ENCODE measurements at regions of chr6 and their contacts with region 1.

Region 1: DNA sequence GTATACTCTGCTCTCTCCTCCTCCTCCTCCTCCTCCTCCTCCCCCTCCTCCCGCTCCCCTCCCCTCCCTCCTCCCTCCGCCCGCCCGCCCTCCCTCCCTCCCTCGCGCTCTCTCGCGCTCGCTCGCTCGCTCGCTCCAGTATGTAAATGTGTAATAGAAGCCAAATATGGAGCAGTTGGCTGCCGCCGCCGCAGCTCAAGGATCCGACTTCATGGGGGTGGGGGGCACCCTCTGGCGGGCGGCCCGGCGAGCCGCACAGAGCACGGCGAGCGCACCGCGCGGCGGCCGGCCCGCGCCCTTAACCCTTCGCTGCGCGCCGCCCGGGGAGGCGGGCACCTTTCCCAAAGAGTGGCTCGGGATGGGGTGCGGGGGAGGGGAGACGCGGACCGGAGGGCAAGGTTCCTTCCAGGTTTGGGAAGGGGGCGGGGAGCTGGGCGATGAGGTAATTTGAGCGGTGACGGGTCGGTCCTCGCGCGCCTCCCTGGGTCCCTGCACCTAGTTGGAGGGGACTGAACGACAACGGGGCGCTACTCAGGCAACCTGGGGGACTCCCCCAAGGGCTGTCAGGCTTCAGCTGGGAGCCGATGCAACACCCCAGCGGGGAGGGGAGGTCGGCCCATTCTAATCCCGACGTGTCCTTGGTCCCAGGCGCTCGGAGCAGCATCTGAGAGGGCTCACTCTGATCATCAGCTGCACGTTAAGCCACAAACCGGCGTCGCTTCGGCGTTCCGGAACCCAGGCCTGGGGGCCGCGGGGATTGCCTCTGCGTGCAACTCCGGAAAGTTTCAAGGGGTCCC is 409 bp upstream of the ATXN1 start:
- DNase-seq: peak; percentile 68 to 92 (median 81)
- ATAC-seq: peak; percentile 72
- H3K4me3 ChIP-seq: peak overlapping the region; percentile 91
- H3K4me3 Mint-ChIP-seq: peak overlapping the region; percentile 87 to 100 (median 98)
- H3K27ac ChIP-seq: peak overlapping the region; percentile 95
- H3K27ac Mint-ChIP-seq: peak overlapping the region; percentile 95 to 100 (median 97)
- H3K4me1 ChIP-seq: peaks cover 7 to 34% of the 10 kb centered on the region in 2 donors
- H3K4me1 Mint-ChIP-seq: peaks cover 18 to 61% (median 42%) of the 10 kb centered on the region in 7 donors
- H3K27me3 ChIP-seq: no peaks in the 10 kb centered on the region
- H3K27me3 Mint-ChIP-seq: peaks cover 0 to 4% (median 0%) of the 10 kb centered on the region in 5 donors

Region 2: DNA sequence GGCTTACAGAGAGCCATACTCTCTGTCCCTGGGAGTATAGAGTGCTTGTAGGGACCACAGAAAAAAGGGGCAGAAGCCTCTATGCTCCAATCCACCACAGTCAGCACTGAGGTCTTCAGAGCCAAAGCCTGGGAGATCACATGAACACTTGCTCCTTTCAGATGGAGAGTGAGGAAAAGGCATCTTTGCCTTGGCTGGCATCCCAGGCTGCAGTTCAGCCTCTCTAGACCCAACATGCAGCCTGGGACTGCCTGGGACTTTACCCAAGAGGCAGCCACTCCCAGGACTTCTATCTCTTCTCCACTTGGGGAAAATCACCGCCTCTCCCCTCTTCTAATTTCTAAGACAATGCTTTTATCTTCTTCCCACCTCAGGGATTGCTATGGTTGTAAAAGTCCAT is 679.3 kb before region 1 on chr6:
- CTCF ChIA-PET with region 1: no interaction called
- POLR2A ChIA-PET with region 1: no interaction called
- intact Hi-C with region 1: no loop called
- DNase-seq: no peak
- ATAC-seq: no peak
- H3K4me3 ChIP-seq: no peak overlapping the region
- H3K4me3 Mint-ChIP-seq: no peak overlapping the region
- H3K27ac ChIP-seq: no peak overlapping the region
- H3K27ac Mint-ChIP-seq: no peak overlapping the region
- H3K4me1 ChIP-seq: no peaks in the 10 kb centered on the region
- H3K4me1 Mint-ChIP-seq: no peaks in the 10 kb centered on the region
- H3K27me3 ChIP-seq: no peaks in the 10 kb centered on the region
- H3K27me3 Mint-ChIP-seq: peaks cover 0 to 14% (median 0%) of the 10 kb centered on the region in 5 donors

Region 3: DNA sequence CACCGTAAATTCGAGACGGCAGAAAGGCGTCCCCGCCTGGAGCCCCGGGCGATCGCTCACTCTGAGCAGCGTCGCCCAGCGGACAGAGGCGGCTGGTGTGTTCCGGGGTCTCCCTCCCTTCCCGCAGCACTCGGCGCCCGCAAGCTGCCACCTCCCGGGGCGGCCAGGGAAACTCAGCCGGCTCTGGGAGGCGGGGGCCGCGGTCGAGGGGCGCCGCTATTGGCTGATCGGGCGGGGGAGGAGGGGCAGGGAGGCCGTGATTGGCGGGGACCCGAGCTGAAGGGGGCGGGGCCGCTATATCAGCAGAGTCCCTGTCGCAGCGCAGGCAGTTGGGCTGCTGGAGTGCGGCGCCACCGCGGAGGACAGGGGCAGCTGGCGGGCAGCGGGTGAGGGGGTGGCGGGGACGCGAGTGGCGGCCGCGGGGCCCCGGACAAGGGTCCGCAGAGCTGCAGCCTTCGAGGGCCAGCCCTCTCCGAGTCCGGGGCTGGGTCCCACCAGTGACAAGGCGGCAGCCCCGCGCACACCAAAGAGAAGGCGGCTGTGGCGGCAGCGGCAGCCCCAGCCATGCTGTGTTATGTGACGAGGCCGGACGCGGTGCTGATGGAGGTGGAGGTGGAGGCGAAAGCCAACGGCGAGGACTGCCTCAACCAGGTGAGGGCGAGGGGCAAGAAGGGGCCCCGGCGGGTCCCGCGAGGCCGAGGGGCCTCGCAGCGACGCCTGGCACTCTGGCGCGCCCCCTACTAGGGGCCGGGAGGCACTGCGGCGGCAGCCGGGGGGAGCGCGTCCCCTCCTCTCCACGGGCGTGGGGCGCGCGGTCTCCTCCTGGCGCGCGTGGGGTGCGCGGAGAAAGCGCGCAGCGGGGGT is 632.7 kb before region 1 on chr6 and contains the start of gene MYLIP:
- CTCF ChIA-PET with region 1: no interaction called
- POLR2A ChIA-PET with region 1: no interaction called
- intact Hi-C with region 1: loop called (anchors 2 to 5 kb)
- DNase-seq: peak; percentile 93 to 97 (median 96)
- ATAC-seq: peak; percentile 93
- H3K4me3 ChIP-seq: peak within 1 kb of the TSS; percentile 91
- H3K4me3 Mint-ChIP-seq: peak within 1 kb of the TSS; percentile 93 to 100 (median 96)
- H3K27ac ChIP-seq: peak within 1 kb of the TSS; percentile 97
- H3K27ac Mint-ChIP-seq: peak within 1 kb of the TSS; percentile 76 to 98 (median 95)
- H3K4me1 ChIP-seq: peaks cover 30 to 39% of the 10 kb centered on the region in 2 donors
- H3K4me1 Mint-ChIP-seq: peaks cover 20 to 50% (median 35%) of the 10 kb centered on the region in 7 donors
- H3K27me3 ChIP-seq: no peaks in the 10 kb centered on the region
- H3K27me3 Mint-ChIP-seq: peaks cover 0 to 25% (median 0%) of the 10 kb centered on the region in 5 donors
- total RNA-seq, gene MYLIP: 17.8 to 215 (median 23.0) TPM

Region 4: DNA sequence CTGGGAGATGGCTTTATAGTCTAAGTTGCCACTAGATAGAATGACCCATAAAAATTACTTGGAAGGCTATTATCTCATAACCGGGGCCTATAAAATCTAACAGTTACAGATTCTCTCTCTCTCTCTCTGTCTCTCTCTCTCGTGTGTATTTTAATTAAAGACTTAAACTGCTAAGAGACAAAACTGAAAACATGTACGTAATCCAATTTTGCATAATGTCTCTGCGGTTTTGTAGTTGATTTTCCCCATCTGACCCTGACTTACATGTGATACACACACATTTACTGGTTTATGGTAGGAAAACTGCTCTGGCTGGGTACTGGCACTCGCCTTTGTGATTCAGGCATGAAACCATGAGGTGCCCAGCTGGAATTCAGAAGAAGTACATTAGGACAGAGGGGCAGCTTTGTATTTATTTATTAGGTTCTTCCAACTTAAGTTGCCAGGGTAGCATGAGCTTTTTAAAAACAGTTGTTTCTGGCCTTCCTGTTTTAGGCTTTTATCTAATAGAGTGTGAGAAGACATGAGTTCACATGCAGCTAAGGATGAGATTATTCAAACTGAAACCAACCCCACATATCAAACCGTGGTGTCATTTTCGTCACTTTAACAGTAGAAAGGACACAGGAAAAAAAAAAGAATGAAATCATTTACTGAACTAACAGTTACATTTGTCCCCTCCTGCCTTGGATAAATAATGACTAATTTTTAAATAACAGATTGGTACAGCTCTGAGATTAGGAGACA is 340.8 kb before region 1 on chr6:
- CTCF ChIA-PET with region 1: no interaction called
- POLR2A ChIA-PET with region 1: no interaction called
- intact Hi-C with region 1: loop called in 1 of 2 experiments (anchors 1 kb)
- DNase-seq: peak in 7 of 9 donors; percentile 22 to 52 (median 34)
- ATAC-seq: peak; percentile 80
- H3K4me3 ChIP-seq: peak overlapping the region; percentile 31
- H3K4me3 Mint-ChIP-seq: peak overlapping the region in 9 of 10 donors; percentile 59 to 84 (median 69)
- H3K27ac ChIP-seq: peak overlapping the region; percentile 70
- H3K27ac Mint-ChIP-seq: peak overlapping the region; percentile 72 to 99 (median 92)
- H3K4me1 ChIP-seq: peaks cover 16 to 31% of the 10 kb centered on the region in 2 donors
- H3K4me1 Mint-ChIP-seq: peaks cover 16 to 60% (median 37%) of the 10 kb centered on the region in 7 donors
- H3K27me3 ChIP-seq: no peaks in the 10 kb centered on the region
- H3K27me3 Mint-ChIP-seq: no peaks in the 10 kb centered on the region

Region 5: DNA sequence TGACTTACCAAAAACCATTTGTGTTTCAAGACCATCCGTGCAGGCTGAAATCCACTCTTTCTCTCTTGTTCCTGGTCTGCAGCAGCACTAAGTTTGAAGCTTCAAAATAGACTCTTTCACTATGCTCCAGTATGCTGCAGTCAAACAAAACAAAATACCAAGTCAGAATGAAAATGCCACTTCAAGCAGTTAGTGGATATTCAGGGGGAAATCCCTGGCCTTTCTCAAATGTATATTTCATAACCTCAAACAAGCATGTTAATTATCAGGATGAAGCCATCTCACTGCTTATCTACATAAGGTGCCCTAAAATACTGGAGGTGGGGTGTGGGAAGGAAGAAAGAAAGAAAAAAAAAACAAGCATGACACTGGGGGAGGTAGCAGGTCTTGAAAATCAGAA is 103.9 kb before region 1 on chr6:
- CTCF ChIA-PET with region 1: no interaction called
- POLR2A ChIA-PET with region 1: interaction called, 4 read pairs
- intact Hi-C with region 1: loop called (anchors 2 to 5 kb)
- DNase-seq: no peak
- ATAC-seq: peak; percentile 5
- H3K4me3 ChIP-seq: no peak overlapping the region
- H3K4me3 Mint-ChIP-seq: peak overlapping the region in 1 of 10 donors; percentile 45
- H3K27ac ChIP-seq: no peak overlapping the region
- H3K27ac Mint-ChIP-seq: peak overlapping the region in 2 of 9 donors; percentile 11 to 93
- H3K4me1 ChIP-seq: peaks cover 0 to 61% of the 10 kb centered on the region in 2 donors
- H3K4me1 Mint-ChIP-seq: peaks cover 24 to 67% (median 30%) of the 10 kb centered on the region in 7 donors
- H3K27me3 ChIP-seq: no peaks in the 10 kb centered on the region
- H3K27me3 Mint-ChIP-seq: no peaks in the 10 kb centered on the region

Region 6: DNA sequence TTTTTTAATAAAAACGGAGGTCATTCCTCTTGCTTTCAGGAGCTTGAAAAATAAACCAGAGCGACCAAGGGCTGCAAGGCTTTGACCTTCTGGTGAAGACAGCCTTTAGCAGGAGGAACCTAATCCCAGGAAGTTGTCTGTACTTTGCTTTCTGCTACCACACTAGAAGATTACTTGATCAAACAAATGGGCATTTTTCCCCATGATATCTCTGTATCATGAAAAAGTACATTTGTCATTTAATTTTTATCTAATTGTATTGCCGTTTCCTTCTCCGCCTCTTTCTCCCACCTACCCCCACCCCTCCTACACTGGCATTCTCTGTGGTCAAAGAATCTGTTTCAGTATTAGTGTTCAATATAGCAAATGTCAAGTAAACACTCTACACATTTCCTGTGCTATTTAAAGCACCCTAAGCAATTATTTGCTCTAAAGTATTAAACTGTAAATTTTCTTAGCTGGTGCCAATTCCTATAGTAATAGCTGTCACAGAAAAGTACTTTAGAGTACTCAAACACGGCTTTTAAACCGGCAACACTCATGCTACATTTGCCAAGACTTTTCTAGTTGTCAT is 30.1 kb before region 1 on chr6:
- CTCF ChIA-PET with region 1: interaction called, 4 read pairs
- POLR2A ChIA-PET with region 1: interaction called, 6 read pairs
- intact Hi-C with region 1: loop called in 1 of 2 experiments (anchors 1 kb)
- DNase-seq: peak in 1 of 9 donors; percentile 42
- ATAC-seq: peak; percentile 54
- H3K4me3 ChIP-seq: no peak overlapping the region
- H3K4me3 Mint-ChIP-seq: peak overlapping the region in 8 of 10 donors; percentile 3 to 78 (median 45)
- H3K27ac ChIP-seq: no peak overlapping the region
- H3K27ac Mint-ChIP-seq: peak overlapping the region in 4 of 9 donors; percentile 51 to 77 (median 74)
- H3K4me1 ChIP-seq: peaks cover 12 to 41% of the 10 kb centered on the region in 2 donors
- H3K4me1 Mint-ChIP-seq: peaks cover 14 to 65% (median 22%) of the 10 kb centered on the region in 7 donors
- H3K27me3 ChIP-seq: no peaks in the 10 kb centered on the region
- H3K27me3 Mint-ChIP-seq: no peaks in the 10 kb centered on the region

Region 7: GRCh38 chr6:16781348-16782169 is 19.9 kb after region 1 on chr6:
- CTCF ChIA-PET with region 1: no interaction called
- POLR2A ChIA-PET with region 1: no interaction called
- intact Hi-C with region 1: no loop called
- DNase-seq: no peak
- ATAC-seq: no peak
- H3K4me3 ChIP-seq: no peak overlapping the region
- H3K4me3 Mint-ChIP-seq: no peak overlapping the region
- H3K27ac ChIP-seq: no peak overlapping the region
- H3K27ac Mint-ChIP-seq: no peak overlapping the region
- H3K4me1 ChIP-seq: no peaks in the 10 kb centered on the region
- H3K4me1 Mint-ChIP-seq: peaks cover 0 to 2% (median 0%) of the 10 kb centered on the region in 7 donors
- H3K27me3 ChIP-seq: no peaks in the 10 kb centered on the region
- H3K27me3 Mint-ChIP-seq: peaks cover 0 to 22% (median 0%) of the 10 kb centered on the region in 5 donors

Region 8: GRCh38 chr6:17086469-17086868 is 324.8 kb after region 1 on chr6:
- CTCF ChIA-PET with region 1: no interaction called
- POLR2A ChIA-PET with region 1: no interaction called
- intact Hi-C with region 1: loop called in 1 of 2 experiments (anchors 10 kb)
- DNase-seq: peak in 3 of 9 donors; percentile 0 to 6 (median 3)
- ATAC-seq: no peak
- H3K4me3 ChIP-seq: no peak overlapping the region
- H3K4me3 Mint-ChIP-seq: no peak overlapping the region
- H3K27ac ChIP-seq: no peak overlapping the region
- H3K27ac Mint-ChIP-seq: no peak overlapping the region
- H3K4me1 ChIP-seq: no peaks in the 10 kb centered on the region
- H3K4me1 Mint-ChIP-seq: no peaks in the 10 kb centered on the region
- H3K27me3 ChIP-seq: no peaks in the 10 kb centered on the region
- H3K27me3 Mint-ChIP-seq: peaks cover 4 to 22% (median 14%) of the 10 kb centered on the region in 5 donors

Region 9: GRCh38 chr6:18264219-18264922 is 1502.7 kb after region 1 on chr6 and contains the start of gene DEK:
- CTCF ChIA-PET with region 1: no interaction called
- POLR2A ChIA-PET with region 1: no interaction called
- intact Hi-C with region 1: loop called in 1 of 2 experiments (anchors 2 kb)
- DNase-seq: peak; percentile 64 to 85 (median 78)
- ATAC-seq: peak; percentile 84
- H3K4me3 ChIP-seq: peak within 1 kb of the TSS; percentile 71
- H3K4me3 Mint-ChIP-seq: peak within 1 kb of the TSS; percentile 90 to 99 (median 94)
- H3K27ac ChIP-seq: peak within 1 kb of the TSS; percentile 83
- H3K27ac Mint-ChIP-seq: peak within 1 kb of the TSS; percentile 91 to 98 (median 96)
- H3K4me1 ChIP-seq: peaks cover 26 to 33% of the 10 kb centered on the region in 2 donors
- H3K4me1 Mint-ChIP-seq: peaks cover 39 to 55% (median 51%) of the 10 kb centered on the region in 7 donors
- H3K27me3 ChIP-seq: no peaks in the 10 kb centered on the region
- H3K27me3 Mint-ChIP-seq: no peaks in the 10 kb centered on the region
- total RNA-seq, gene DEK: 49.6 to 174 (median 101) TPM

Measured in naive thymus-derived CD4-positive, alpha-beta T cell (primary cell).